ENCODE measurements at regions of chr1 and their contacts with region 1.

Region 1: DNA sequence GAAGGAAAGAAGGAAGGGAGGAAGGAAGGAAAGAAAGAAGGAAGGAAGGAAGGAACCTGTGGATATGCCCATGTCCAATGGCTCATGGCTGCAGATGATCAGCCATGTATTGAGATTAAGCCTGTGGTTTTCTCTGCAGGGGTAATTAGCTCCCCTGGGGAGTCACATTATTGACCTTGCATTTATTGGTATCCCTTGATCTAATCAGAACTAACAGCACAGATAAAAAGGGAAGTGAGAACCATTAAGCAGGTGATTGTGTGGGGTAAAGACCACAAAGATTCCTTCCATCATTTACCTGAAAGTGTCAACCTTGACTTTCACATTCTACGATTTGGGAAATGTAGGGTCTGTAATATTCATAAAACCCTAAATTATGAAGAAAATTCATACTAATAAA is 390.7 kb downstream of the BRINP2 start:
- DNase-seq: peak; percentile 73
- H3K4me3 ChIP-seq: no peak overlapping the region
- H3K27ac ChIP-seq: no peak overlapping the region
- H3K4me1 ChIP-seq: no peaks in the 10 kb centered on the region
- H3K27me3 ChIP-seq: no peaks in the 10 kb centered on the region
- CTCF ChIP-seq: no peak

Region 2: DNA sequence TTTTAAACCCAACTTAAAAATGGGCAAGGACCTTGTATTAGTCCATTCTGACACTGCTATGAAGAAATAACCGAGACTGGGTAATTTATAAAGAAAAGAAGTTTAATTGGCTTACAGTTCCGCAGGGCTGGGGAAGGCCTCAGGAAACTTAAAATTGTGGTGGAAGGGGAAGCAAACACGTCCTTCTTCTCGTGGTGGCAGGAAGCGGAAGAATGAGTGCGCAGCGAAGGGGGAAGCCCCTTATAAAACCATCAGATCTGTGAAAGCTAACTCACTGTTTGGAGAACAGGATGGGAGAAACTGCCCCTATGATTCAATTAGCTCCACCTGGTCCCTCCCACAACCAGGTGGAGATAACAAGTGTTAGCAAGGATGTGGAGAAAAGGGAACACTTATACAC is 170.7 kb after region 1 on chr1:
- CTCF ChIA-PET with region 1: no interaction called
- POLR2A ChIA-PET with region 1: no interaction called
- intact Hi-C with region 1: loop called (anchors 1 kb)
- DNase-seq: peak; percentile 83
- H3K4me3 ChIP-seq: peak overlapping the region; percentile 50
- H3K27ac ChIP-seq: peak overlapping the region; percentile 97
- H3K4me1 ChIP-seq: peaks cover 49% of the 10 kb centered on the region
- H3K27me3 ChIP-seq: no peaks in the 10 kb centered on the region
- CTCF ChIP-seq: no peak

Measured in A673 (cell line).